Activated CD4-positive, alpha-beta T cell treated with anti-CD3 and anti-CD28 coated beads for 36 hours (primary cell): ENCODE measurements at regions of chr11 and their contacts with region 1.

Region 1: DNA sequence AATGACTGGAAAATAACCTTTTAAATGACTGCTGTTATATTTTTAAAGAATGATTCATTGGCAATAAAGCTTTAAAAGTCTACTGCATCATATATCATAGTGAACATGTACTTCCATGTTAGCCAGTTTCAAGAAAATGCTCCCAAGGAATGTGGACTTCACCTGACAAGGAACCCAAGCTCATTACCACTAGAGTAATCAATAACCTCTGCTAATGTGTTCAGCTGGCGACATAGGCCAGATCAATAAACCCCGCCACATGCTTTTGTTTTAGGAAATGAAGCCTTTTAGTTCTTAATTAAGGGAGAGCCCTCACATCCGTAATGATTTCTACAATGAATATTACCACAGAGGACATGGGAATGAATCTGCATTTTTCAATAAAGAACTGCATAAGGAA is 1219.9 kb upstream of the CNTN5 start:
- DNase-seq: no peak
- ATAC-seq: no peak
- H3K4me3 Mint-ChIP-seq: no peak overlapping the region
- H3K27ac Mint-ChIP-seq: no peak overlapping the region
- H3K4me1 Mint-ChIP-seq: no peaks in the 10 kb centered on the region
- H3K27me3 Mint-ChIP-seq: no peaks in the 10 kb centered on the region

Region 2: GRCh38 chr11:97764605-97765004 is 36.3 kb before region 1 on chr11:
- CTCF ChIA-PET with region 1: no interaction called
- POLR2A ChIA-PET with region 1: no interaction called
- intact Hi-C with region 1: loop called in 1 of 2 experiments (anchors 5 kb)
- DNase-seq: no peak
- ATAC-seq: no peak
- H3K4me3 Mint-ChIP-seq: no peak overlapping the region
- H3K27ac Mint-ChIP-seq: no peak overlapping the region
- H3K4me1 Mint-ChIP-seq: no peaks in the 10 kb centered on the region
- H3K27me3 Mint-ChIP-seq: no peaks in the 10 kb centered on the region